Dendritic cell treated with granulocyte-macrophage colony-stimulating factor and Interleukin-4, amounts not matched to agents 40 ng/mL and 50 ng/mL, for 4 days (primary cell): ENCODE measurements at regions of chr3 and their contacts with region 1.

Region 1: DNA sequence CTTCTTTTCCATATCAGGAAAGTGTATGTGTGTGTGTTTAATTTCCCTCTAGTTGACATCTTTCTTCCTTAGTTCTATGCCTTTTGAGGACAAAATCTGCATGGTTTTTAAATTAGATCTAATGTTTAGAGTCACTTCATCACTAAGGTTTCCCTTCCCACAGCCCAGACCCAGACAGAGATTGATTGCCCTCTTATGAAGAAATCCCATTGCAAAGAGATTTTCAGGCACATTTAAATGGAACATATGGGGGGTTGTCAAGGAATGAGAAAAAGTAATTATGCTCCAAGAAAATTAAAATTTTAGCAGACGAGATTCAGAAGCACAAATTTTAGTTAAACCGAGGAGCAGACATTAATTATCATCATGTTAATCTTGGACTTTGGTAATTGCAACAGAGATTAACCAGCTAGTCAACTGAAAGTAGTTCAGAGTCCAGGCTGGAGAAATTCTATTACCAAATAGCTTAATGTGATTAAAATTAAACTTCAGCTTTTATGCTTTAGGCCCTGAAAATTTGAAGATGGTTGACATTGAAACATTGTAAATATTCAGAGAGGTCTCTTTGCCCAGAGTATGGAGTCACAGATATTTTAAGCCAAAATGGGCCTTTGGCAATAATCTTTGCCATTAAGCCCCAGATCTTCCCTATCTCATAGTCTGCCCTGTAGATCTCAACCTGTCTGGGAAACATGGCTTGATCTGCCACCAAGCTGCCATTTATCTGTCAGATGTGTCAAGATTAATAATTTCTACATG is 143.4 kb downstream of the TMEM108 start:
- H3K4me3 Mint-ChIP-seq: no peak overlapping the region
- H3K27ac Mint-ChIP-seq: no peak overlapping the region
- H3K4me1 Mint-ChIP-seq: no peaks in the 10 kb centered on the region
- H3K27me3 Mint-ChIP-seq: no peaks in the 10 kb centered on the region

Region 2: DNA sequence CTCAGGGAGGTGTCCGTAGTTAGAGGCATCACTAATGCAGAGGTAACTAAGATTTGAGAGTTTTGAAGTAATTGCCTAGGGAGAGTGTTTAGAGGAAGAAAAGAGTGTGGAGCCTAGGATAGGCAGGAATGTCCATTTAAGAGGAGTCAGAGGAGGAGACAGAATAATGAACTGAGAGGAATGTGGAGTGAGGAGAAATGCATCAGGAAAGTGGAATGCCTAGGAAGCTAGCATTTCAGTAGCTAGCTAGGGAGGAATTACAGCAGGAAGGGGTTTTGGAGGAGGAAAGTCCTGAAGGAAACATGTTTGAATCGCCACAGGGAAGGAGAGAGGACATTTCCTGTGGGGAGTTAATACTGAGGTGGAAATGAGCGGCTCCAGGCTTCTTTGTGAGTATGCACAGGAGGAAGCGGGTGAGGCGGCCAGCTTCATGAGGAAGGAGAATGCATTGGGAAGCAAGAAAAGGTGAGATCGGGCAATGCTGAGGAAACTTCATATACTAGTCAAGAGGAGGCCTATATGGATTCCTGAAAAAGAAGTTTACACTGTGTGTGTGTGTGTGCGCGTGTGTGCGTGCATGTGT is 10.9 kb after region 1 on chr3:
- intact Hi-C with region 1: loop called (anchors 1 kb)
- H3K4me3 Mint-ChIP-seq: no peak overlapping the region
- H3K27ac Mint-ChIP-seq: no peak overlapping the region
- H3K4me1 Mint-ChIP-seq: no peaks in the 10 kb centered on the region
- H3K27me3 Mint-ChIP-seq: peaks cover 5% of the 10 kb centered on the region